ENCODE measurements at regions of chr9 and their contacts with region 1.

Region 1: GRCh38 chr9:95127249-95128176 is 190.0 kb downstream of the FANCC start:
- DNase-seq: peak; percentile 84
- H3K4me3 ChIP-seq: peak overlapping the region in 1 of 2 experiments; percentile 47; a peak in 1 of 4 replicates
- H3K27ac ChIP-seq: peak overlapping the region in 1 of 2 experiments; percentile 69; a peak in 1 of 4 replicates
- H3K4me1 ChIP-seq: peaks cover 0 to 74% of the 10 kb centered on the region in 2 experiments; a peak in 2 of 4 replicates
- H3K27me3 ChIP-seq: no peaks in the 10 kb centered on the region
- CTCF ChIP-seq: peak; percentile 98
- EP300 ChIP-seq: no peak; a peak in 1 of 4 replicates
- RAD21 ChIP-seq: peak; percentile 88

Region 2: DNA sequence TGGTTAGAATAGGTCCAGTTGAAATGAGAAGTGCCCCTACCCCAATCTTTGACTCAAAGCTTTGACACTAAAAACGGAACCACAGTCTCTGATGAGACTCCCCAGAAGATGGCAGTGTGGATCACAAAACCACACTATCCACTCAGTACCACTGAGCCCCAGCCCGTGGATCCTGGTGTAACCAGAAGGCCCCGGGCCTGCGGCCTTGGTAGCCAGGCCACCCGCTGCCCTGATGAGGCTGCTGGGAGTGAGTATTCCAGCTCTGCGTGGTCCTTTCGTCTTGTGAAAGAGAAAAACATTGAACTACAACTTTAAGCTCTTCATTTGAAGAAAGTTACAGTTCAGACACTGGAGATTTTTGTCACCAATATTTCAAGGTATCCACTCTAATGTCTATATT is 446.0 kb before region 1 on chr9:
- CTCF ChIA-PET with region 1: interaction called, 229 read pairs
- POLR2A ChIA-PET with region 1: interaction called, 5 read pairs
- DNase-seq: peak; percentile 87
- H3K4me3 ChIP-seq: no peak overlapping the region; a peak in 1 of 4 replicates
- H3K27ac ChIP-seq: peak overlapping the region in 1 of 2 experiments; percentile 83; a peak in 2 of 4 replicates
- H3K4me1 ChIP-seq: peaks cover 0 to 35% of the 10 kb centered on the region in 2 experiments; a peak in 1 of 4 replicates
- H3K27me3 ChIP-seq: no peaks in the 10 kb centered on the region
- CTCF ChIP-seq: peak; percentile 81
- EP300 ChIP-seq: no peak
- RAD21 ChIP-seq: peak; percentile 94

Region 3: DNA sequence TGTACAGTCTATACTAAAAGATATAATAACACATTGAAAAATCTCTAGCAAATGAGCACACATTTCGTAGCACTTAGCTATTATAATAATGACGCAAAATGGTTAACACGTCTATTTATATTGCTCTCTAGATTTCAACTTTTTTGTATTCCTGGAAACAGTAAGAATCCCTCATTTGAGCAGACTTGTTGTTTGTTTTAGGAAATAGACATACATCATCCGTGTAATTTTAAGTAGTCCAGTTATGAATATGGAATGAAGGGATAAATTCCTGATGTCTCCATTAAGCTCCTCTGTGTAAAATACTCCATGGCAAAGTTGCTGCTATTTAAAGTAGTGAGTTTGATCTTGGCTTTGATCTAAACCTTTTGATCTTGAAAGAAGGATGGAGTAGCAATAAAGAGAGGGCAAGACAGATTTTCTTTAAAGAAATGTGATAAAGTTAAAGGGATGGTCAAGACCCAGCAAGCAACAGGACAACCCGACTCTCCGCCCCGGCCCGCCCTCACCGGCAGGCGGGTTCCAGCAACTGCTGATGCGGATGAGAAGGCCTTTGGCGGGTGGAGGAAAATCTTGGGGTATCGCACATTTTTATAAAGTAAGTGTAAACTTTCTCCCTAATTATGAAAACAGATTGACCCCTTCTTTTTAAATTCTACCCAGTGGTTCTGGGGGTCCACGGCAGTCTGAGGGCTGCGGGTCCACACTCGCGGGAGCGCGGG is 123.7 kb before region 1 on chr9:
- CTCF ChIA-PET with region 1: interaction called, 12 read pairs
- POLR2A ChIA-PET with region 1: no interaction called
- DNase-seq: peak; percentile 80
- H3K4me3 ChIP-seq: peak overlapping the region; percentile 67 to 87
- H3K27ac ChIP-seq: peak overlapping the region; percentile 84 to 97
- H3K4me1 ChIP-seq: peaks cover 0 to 22% of the 10 kb centered on the region in 2 experiments; a peak in 2 of 4 replicates
- H3K27me3 ChIP-seq: no peaks in the 10 kb centered on the region
- CTCF ChIP-seq: peak; percentile 25
- EP300 ChIP-seq: no peak
- RAD21 ChIP-seq: no peak; the same call in 1 of the 2 replicates

Region 4: DNA sequence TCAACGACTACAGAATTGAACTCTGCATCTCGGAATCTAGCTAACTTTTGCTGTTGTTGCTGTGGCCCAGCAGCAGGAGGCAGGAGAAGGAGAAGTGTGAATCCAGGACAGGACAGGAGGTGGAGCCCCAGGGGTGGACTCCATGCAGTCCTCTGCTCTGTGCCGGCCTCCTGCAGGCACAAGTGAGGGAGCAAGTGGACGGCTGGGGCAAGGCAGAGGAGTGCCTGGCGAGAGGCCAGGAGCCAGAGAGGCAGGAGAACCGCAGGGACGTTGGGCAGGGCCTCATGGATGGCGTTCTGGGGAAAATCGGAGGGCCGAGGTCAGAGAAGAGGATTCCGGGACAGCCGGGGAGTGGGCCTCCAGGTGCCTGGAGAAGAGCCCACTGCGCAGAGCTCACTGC is 24.1 kb before region 1 on chr9:
- CTCF ChIA-PET with region 1: interaction called, 65 read pairs
- POLR2A ChIA-PET with region 1: interaction called, 3 read pairs
- DNase-seq: peak; percentile 71
- H3K4me3 ChIP-seq: no peak overlapping the region
- H3K27ac ChIP-seq: peak overlapping the region in 1 of 2 experiments; percentile 76; a peak in 2 of 4 replicates
- H3K4me1 ChIP-seq: peaks cover 9 to 68% of the 10 kb centered on the region in 2 experiments; a peak in 1 of 4 replicates
- H3K27me3 ChIP-seq: no peaks in the 10 kb centered on the region
- CTCF ChIP-seq: no peak; the same call in 1 of the 2 replicates
- EP300 ChIP-seq: no peak
- RAD21 ChIP-seq: peak; percentile 38

Region 5: DNA sequence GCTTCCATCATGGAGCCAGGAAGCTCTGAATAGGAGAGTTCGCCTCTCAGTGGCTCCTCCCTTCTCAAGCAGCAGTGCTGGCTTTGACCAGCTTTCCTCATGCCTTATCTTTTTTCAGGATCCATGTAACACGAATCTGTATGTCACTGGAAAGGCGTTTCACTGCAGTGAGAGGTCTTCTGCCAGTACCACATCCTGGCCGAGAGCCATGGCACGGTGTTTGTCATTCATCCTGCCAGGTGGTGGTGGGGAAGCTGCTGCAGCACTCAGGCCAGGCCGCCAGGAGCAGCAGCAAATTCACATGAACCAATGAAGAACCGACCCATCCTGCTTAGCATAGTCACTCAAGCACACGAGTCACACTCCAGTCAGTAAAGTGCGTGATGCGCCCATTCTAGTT is 11.0 kb after region 1 on chr9:
- CTCF ChIA-PET with region 1: interaction called, 25 read pairs
- POLR2A ChIA-PET with region 1: interaction called, 3 read pairs
- DNase-seq: peak; percentile 51
- H3K4me3 ChIP-seq: no peak overlapping the region
- H3K27ac ChIP-seq: peak overlapping the region in 1 of 2 experiments; percentile 65; a peak in 1 of 4 replicates
- H3K4me1 ChIP-seq: peaks cover 1 to 37% of the 10 kb centered on the region in 2 experiments
- H3K27me3 ChIP-seq: no peaks in the 10 kb centered on the region
- CTCF ChIP-seq: no peak; the same call in 1 of the 2 replicates
- EP300 ChIP-seq: no peak
- RAD21 ChIP-seq: no peak

Measured in SK-N-SH (cell line).